ENCODE measurements at regions of chr3 and their contacts with region 1.

Region 1: GRCh38 chr3:162152636-162153035 is 656.0 kb downstream of the OTOL1 start:
- DNase-seq: peak; percentile 8
- ATAC-seq: no peak
- H3K4me3 ChIP-seq: no peak overlapping the region
- H3K27ac ChIP-seq: no peak overlapping the region
- H3K4me1 ChIP-seq: peaks cover 5% of the 10 kb centered on the region; the same call in 1 of the 2 replicates
- H3K27me3 ChIP-seq: no peaks in the 10 kb centered on the region
- CTCF ChIP-seq: no peak
- EP300 ChIP-seq: no peak
- POLR2A ChIP-seq: no peak
- RAD21 ChIP-seq: no peak

Region 2: GRCh38 chr3:162236949-162237348 is 84.3 kb after region 1 on chr3:
- CTCF ChIA-PET with region 1: no interaction called
- POLR2A ChIA-PET with region 1: no interaction called
- in situ Hi-C with region 1: loop called (anchors 5 kb)
- intact Hi-C with region 1: no loop called
- DNase-seq: no peak
- ATAC-seq: no peak
- H3K4me3 ChIP-seq: no peak overlapping the region
- H3K27ac ChIP-seq: no peak overlapping the region
- H3K4me1 ChIP-seq: no peaks in the 10 kb centered on the region
- H3K27me3 ChIP-seq: no peaks in the 10 kb centered on the region; a peak in 1 of 5 replicates
- CTCF ChIP-seq: no peak
- EP300 ChIP-seq: no peak
- POLR2A ChIP-seq: no peak
- RAD21 ChIP-seq: no peak

Region 3: DNA sequence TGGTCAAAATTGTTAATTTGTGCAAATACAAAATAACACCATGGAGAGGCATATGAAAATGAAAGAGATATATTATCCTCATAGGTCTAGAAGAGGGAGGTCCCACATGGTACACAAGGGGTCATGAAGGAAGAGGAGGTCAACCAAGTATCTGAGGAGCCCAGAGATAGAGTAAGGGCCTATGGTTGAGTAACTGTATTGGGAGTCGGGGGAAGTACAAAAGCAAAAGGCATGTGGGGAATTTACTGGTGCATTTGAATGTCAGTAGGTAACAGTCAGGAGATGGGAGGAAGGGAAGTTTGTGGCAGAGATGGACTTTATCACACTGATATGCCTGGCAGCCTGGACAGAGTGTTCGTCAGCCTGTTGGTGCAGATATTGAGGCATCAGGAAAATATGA is 457.6 kb after region 1 on chr3:
- CTCF ChIA-PET with region 1: no interaction called
- POLR2A ChIA-PET with region 1: no interaction called
- in situ Hi-C with region 1: no loop called
- intact Hi-C with region 1: no loop called
- DNase-seq: no peak
- ATAC-seq: no peak
- H3K4me3 ChIP-seq: no peak overlapping the region
- H3K27ac ChIP-seq: no peak overlapping the region
- H3K4me1 ChIP-seq: no peaks in the 10 kb centered on the region
- H3K27me3 ChIP-seq: no peaks in the 10 kb centered on the region
- CTCF ChIP-seq: no peak
- EP300 ChIP-seq: no peak
- POLR2A ChIP-seq: no peak
- RAD21 ChIP-seq: no peak

Measured in HepG2 (cell line).